CD4-positive, alpha-beta T cell (primary cell): ENCODE measurements at regions of chr19 and their contacts with region 1.

Region 1: GRCh38 chr19:12333162-12334159 is at the start of gene ZNF563:
- DNase-seq: peak; percentile 96 to 99 (median 98)
- ATAC-seq: peak; percentile 92
- H3K4me3 ChIP-seq: peak within 1 kb of the TSS; percentile 86
- H3K4me3 Mint-ChIP-seq: peak within 1 kb of the TSS; percentile 100
- H3K27ac ChIP-seq: peak within 1 kb of the TSS; percentile 84 to 90
- H3K27ac Mint-ChIP-seq: peak within 1 kb of the TSS; percentile 96
- H3K4me1 ChIP-seq: peaks cover 25% of the 10 kb centered on the region
- H3K4me1 Mint-ChIP-seq: peaks cover 47% of the 10 kb centered on the region
- H3K27me3 ChIP-seq: no peaks in the 10 kb centered on the region
- H3K27me3 Mint-ChIP-seq: no peaks in the 10 kb centered on the region
- CTCF ChIP-seq: no peak
- total RNA-seq, gene ZNF563: 4.5 to 5.1 TPM

Region 2: GRCh38 chr19:11987405-11988281 is 345.8 kb before region 1 on chr19:
- CTCF ChIA-PET with region 1: interaction called, 5 read pairs
- POLR2A ChIA-PET with region 1: interaction called, 10 read pairs
- intact Hi-C with region 1: no loop called
- DNase-seq: peak; percentile 82 to 95 (median 90)
- ATAC-seq: peak; percentile 91
- H3K4me3 ChIP-seq: peak overlapping the region; percentile 100
- H3K4me3 Mint-ChIP-seq: peak overlapping the region; percentile 88
- H3K27ac ChIP-seq: peak overlapping the region; percentile 86 to 91
- H3K27ac Mint-ChIP-seq: peak overlapping the region; percentile 92
- H3K4me1 ChIP-seq: peaks cover 21% of the 10 kb centered on the region
- H3K4me1 Mint-ChIP-seq: peaks cover 34% of the 10 kb centered on the region
- H3K27me3 ChIP-seq: peaks cover 0 to 2% of the 10 kb centered on the region in 2 experiments
- H3K27me3 Mint-ChIP-seq: no peaks in the 10 kb centered on the region
- CTCF ChIP-seq: no peak

Region 3: DNA sequence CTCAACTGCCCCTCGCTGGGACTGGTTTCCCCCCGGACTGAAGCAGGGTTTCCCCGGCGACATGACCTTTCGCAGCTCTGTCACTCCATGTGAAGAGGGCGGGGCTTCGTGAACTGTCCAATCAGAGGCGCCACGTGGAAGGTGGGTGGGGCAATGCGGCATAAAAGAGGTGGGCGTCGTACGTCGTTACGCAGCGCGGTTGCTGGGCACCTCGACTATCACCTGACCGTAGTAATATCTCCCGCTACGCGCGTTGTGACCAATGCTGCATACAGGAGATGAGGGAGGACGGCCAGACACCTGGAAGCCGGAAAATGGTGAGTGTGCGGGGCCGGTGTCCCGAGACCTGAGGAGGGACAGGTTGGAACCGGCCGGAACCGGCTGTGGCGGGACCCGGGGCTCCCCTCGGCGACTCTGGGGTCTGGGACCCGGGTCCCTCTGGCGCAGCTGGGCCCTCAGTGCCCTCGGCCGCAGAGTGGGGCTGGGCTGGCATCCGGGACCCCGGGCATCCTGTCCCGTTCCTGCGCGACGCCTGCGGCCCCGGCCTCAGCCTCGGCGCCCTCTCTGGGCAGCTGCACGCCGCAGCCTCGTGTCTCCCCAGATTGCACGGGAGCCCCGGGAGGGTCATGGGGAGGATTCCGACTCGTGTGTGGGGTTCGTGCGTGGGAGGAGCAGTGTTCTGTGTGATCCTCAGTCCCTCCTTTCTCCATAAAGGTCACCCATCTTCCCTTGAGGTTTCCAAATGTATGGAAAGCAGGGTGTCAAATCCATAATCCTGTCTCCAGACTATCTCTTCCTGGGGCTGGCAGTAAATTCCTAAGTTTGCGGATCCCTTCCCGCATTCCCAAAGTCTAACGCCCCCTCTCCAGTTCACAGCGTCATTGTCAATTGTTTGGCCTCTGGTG is 138.4 kb before region 1 on chr19:
- CTCF ChIA-PET with region 1: no interaction called
- POLR2A ChIA-PET with region 1: interaction called, 6 read pairs
- intact Hi-C with region 1: loop called (anchors 5 kb)
- DNase-seq: peak; percentile 40 to 88 (median 64)
- ATAC-seq: peak; percentile 97
- H3K4me3 ChIP-seq: peak overlapping the region; percentile 44
- H3K4me3 Mint-ChIP-seq: peak overlapping the region; percentile 98
- H3K27ac ChIP-seq: no peak overlapping the region
- H3K27ac Mint-ChIP-seq: peak overlapping the region; percentile 92
- H3K4me1 ChIP-seq: peaks cover 23% of the 10 kb centered on the region
- H3K4me1 Mint-ChIP-seq: peaks cover 42% of the 10 kb centered on the region
- H3K27me3 ChIP-seq: no peaks in the 10 kb centered on the region
- H3K27me3 Mint-ChIP-seq: no peaks in the 10 kb centered on the region
- CTCF ChIP-seq: no peak

Region 4: GRCh38 chr19:12244370-12244769 is 89.1 kb before region 1 on chr19:
- CTCF ChIA-PET with region 1: no interaction called
- POLR2A ChIA-PET with region 1: no interaction called
- intact Hi-C with region 1: no loop called
- DNase-seq: no peak
- ATAC-seq: no peak
- H3K4me3 ChIP-seq: no peak overlapping the region
- H3K4me3 Mint-ChIP-seq: no peak overlapping the region
- H3K27ac ChIP-seq: no peak overlapping the region
- H3K27ac Mint-ChIP-seq: no peak overlapping the region
- H3K4me1 ChIP-seq: no peaks in the 10 kb centered on the region
- H3K4me1 Mint-ChIP-seq: no peaks in the 10 kb centered on the region
- H3K27me3 ChIP-seq: no peaks in the 10 kb centered on the region
- H3K27me3 Mint-ChIP-seq: no peaks in the 10 kb centered on the region
- CTCF ChIP-seq: no peak

Region 5: GRCh38 chr19:12287958-12288500 is 45.4 kb before region 1 on chr19:
- CTCF ChIA-PET with region 1: no interaction called
- POLR2A ChIA-PET with region 1: interaction called, 59 read pairs
- intact Hi-C with region 1: loop called in 1 of 2 experiments (anchors 1 kb)
- DNase-seq: no peak
- ATAC-seq: no peak
- H3K4me3 ChIP-seq: no peak overlapping the region
- H3K4me3 Mint-ChIP-seq: peak overlapping the region; percentile 11
- H3K27ac ChIP-seq: peak overlapping the region; percentile 1 to 34
- H3K27ac Mint-ChIP-seq: peak overlapping the region; percentile 99
- H3K4me1 ChIP-seq: peaks cover 60% of the 10 kb centered on the region
- H3K4me1 Mint-ChIP-seq: peaks cover 51% of the 10 kb centered on the region
- H3K27me3 ChIP-seq: no peaks in the 10 kb centered on the region
- H3K27me3 Mint-ChIP-seq: no peaks in the 10 kb centered on the region
- CTCF ChIP-seq: no peak

Region 6: DNA sequence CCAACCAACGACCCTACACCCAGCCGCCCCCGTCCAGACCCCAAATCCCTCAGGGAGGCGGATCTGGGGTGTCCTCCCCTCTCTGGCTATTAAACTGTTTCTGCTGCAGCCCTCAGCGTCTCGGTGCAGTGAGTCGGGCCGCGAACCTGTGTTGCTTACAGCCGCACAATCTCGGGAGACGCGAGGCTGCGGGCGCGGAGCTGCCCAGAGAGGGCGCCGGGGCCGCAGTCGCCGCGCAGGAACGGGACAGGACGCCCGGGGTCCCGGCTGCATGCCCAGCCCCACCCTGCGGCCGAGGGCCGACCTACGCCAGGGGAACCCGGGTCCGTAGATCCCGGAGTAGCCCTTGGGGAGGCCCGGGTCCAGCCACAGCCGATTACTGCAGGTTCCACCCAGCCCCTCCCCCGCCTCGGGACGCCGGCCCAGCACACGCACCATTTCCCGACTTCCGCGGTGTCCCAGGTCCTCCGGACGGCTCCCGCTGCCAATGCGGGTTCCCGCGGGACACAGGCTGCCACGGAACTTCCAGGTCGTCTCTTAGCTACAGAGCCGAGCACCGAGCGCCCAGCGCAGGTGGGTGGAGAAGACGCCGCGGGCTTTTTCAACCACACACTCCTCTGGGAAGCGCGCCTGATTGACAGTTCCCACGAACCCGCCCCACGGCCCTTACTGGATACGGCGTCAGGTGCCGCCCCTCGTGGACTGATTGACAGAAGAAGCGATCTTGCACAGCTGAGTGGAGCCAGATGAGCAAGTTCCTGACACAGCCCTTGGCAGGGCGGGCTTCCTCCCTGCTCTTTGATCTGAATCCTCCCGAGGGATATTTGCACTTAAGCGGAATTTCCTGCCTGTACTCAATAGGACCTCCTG is 67.4 kb after region 1 on chr19 and contains the start of gene ZNF799:
- CTCF ChIA-PET with region 1: no interaction called
- POLR2A ChIA-PET with region 1: interaction called, 12 read pairs
- intact Hi-C with region 1: no loop called
- DNase-seq: peak; percentile 54 to 90 (median 75)
- ATAC-seq: peak; percentile 92
- H3K4me3 ChIP-seq: peak within 1 kb of the TSS; percentile 95
- H3K4me3 Mint-ChIP-seq: peak within 1 kb of the TSS; percentile 93
- H3K27ac ChIP-seq: no peak within 1 kb of the TSS
- H3K27ac Mint-ChIP-seq: peak within 1 kb of the TSS; percentile 81
- H3K4me1 ChIP-seq: peaks cover 9% of the 10 kb centered on the region
- H3K4me1 Mint-ChIP-seq: peaks cover 27% of the 10 kb centered on the region
- H3K27me3 ChIP-seq: no peaks in the 10 kb centered on the region
- H3K27me3 Mint-ChIP-seq: no peaks in the 10 kb centered on the region
- CTCF ChIP-seq: no peak
- total RNA-seq, gene ZNF799: 1.1 to 1.6 TPM